Pancreas (tissue), 10 donors: ENCODE measurements at regions of chr7 and their contacts with region 1.

Region 1: DNA sequence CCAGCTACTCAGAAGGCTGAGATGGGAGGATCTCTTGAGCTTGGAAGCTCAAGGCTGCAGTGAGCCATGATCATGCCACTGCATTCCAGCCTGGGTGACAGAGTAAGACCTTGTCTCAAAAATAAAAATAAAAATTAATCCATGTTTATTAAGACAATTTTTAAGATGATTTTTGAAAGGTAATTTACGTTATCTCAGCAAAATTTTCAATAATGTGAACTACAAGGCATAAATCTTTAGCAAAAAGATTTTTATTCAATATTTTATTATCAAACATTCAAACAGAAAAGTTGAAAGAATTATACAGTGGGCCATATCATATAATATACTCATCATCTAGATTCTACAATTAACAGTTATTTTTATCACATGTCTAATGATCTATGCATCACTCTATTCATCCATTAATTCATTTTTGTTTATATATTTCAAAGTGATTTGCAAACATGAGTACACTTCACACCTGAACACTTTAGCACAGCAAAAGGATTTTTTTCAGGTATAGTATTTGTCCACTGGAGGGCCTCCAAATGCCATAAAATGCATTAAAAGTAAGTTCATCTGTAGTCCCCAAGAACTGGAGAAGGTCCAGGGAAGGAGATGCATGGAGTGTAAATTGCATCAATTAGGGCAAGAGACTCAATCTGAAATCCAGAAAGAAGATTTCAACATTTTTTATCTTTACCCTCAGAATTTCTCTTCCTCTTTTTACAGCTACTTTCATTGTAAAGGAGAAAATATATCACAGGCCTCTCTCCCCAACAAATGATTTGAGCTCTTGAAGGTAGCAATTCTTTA is 38.6 kb upstream of the RSBN1L start:
- DNase-seq: peak in 2 of 6 donors; percentile 18 to 38
- ATAC-seq: peak; percentile 75 to 86 (median 84)
- H3K4me3 ChIP-seq: no peak overlapping the region
- H3K27ac ChIP-seq: no peak overlapping the region
- H3K4me1 ChIP-seq: peaks cover 7 to 10% (median 9%) of the 10 kb centered on the region in 3 donors
- H3K27me3 ChIP-seq: no peaks in the 10 kb centered on the region
- CTCF ChIP-seq: peak in 3 of 4 donors; percentile 17 to 49 (median 39)

Region 2: DNA sequence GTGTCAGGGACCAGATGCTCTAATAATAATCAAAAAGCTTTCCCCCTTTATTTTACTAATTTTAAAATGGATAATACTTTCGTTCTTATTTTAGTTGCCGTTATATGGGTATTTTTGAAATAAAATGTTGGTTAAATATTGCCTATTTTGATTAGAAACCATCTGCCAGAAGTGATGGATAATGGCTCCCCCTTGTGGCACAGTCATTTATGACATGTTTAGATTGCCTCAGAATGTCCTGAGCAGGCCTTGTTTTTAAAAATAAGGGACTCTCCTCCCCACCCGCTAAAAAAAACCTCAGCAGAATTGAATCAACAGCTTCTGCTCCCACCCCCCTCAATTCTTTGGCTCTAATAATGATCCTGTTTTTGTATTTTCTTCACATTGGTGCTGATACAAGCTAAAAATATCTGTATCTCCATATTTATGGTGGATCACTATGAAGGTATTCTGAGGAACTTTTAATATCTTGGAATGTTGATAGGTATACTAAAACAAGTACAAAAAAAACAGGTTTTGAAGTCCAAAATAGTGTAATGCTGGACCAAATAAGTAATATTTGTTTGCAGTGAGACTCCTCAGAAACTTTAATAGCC is 101.8 kb after region 1 on chr7:
- intact Hi-C with region 1: loop called in 2 of 3 experiments (anchors 5 to 10 kb)
- DNase-seq: peak in 3 of 6 donors; percentile 37 to 66 (median 56)
- ATAC-seq: peak; percentile 62 to 89 (median 81)
- H3K4me3 ChIP-seq: no peak overlapping the region
- H3K27ac ChIP-seq: peak overlapping the region in 2 of 4 donors; percentile 29 to 61
- H3K4me1 ChIP-seq: peaks cover 23 to 35% (median 35%) of the 10 kb centered on the region in 3 donors
- H3K27me3 ChIP-seq: no peaks in the 10 kb centered on the region
- CTCF ChIP-seq: peak; percentile 61 to 81 (median 68)